Activated B cell treated with CpG ODN at 0.5 μM for 24 hours (primary cell): ENCODE measurements at regions of chr17 and their contacts with region 1.

Region 1: DNA sequence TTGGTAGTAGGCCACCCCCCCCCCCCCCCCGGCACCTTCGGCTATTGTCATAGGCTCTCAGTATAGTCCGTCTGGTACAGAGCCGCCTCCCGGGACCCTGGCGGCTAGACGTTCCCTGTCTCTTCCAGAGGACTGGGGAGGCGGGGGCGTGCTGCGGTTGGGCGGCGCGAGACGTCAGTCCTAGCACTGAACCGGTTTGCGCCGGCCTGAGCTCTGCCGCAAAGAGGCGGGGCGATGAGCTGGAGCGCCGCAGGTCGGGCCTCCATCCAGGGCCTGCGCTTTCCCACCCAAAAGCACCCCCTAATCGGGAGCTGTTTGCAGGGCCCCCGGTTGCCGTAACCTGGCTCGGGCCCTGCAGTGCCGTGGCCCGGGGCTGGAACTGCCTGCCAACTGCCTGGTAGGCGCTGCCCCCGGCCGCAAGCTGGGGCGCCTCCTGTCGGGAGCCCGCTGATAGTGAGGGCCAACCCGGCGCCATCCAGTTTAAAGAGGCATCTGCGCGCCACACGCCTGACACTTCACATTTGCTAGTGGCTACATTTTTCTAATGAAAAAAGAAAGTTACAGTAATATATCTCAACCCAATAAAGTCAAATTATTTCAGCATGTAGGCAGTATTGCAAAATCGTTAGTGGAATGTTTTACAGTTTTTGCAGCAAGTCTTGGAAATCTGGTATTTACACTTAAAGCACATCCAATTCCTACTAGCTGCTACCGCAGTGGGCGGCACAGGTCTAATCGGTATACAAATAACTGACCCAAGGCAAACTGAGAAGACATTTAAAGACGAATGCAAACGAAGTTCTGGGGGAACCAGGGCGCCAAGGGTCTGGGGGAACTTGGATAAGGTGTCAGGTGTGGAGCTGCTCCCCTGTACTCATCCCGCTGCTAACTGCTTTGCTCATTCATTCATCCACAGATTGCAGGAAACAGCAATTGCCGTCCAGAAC is 748 bp upstream of the USP22 start:
- DNase-seq: peak; percentile 92
- ATAC-seq: peak; percentile 78
- H3K4me3 Mint-ChIP-seq: peak overlapping the region; percentile 74
- H3K27ac Mint-ChIP-seq: peak overlapping the region; percentile 89
- H3K4me1 Mint-ChIP-seq: peaks cover 37% of the 10 kb centered on the region
- H3K27me3 Mint-ChIP-seq: no peaks in the 10 kb centered on the region
- CTCF ChIP-seq: peak; percentile 21

Region 2: GRCh38 chr17:19977311-19978208 is 1066.0 kb before region 1 on chr17 and contains the start of gene AKAP10:
- CTCF ChIA-PET with region 1: no interaction called
- POLR2A ChIA-PET with region 1: interaction called, 5 read pairs
- intact Hi-C with region 1: loop called (anchors 2 kb)
- DNase-seq: peak; percentile 96
- ATAC-seq: peak; percentile 87
- H3K4me3 Mint-ChIP-seq: peak within 1 kb of the TSS; percentile 99
- H3K27ac Mint-ChIP-seq: peak within 1 kb of the TSS; percentile 99
- H3K4me1 Mint-ChIP-seq: peaks cover 44% of the 10 kb centered on the region
- H3K27me3 Mint-ChIP-seq: no peaks in the 10 kb centered on the region
- CTCF ChIP-seq: no peak
- total RNA-seq, gene AKAP10: 38.7 and 51.5 TPM in 2 replicates

Region 3: DNA sequence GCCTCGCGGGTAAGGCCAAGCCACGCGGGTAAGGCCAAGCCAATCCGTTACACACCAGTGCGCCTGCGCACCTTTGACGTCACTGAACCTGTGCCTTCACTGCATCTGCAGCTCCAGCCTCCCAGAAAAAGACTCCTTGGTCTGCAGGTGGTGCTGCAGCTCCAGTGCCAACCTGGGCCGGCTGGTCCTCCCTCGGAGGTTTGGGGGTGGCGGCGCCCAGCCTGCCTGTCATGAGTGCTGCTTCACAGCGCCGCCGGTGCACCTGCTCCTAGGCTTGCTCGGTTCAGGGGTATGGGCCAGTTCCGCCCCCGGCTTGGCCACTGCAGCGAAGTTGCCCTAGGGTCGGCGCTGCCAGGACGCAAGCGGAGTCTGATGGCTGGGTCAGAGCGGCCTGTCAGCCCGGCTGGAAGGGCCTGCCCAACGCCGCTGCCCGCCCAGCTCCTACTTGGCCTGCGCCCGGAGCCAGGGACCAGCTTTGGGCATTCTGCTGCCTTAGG is 147.4 kb before region 1 on chr17:
- CTCF ChIA-PET with region 1: no interaction called
- POLR2A ChIA-PET with region 1: no interaction called
- intact Hi-C with region 1: no loop called
- DNase-seq: peak; percentile 17
- ATAC-seq: peak; percentile 58
- H3K4me3 Mint-ChIP-seq: no peak overlapping the region
- H3K27ac Mint-ChIP-seq: no peak overlapping the region
- H3K4me1 Mint-ChIP-seq: no peaks in the 10 kb centered on the region
- H3K27me3 Mint-ChIP-seq: peaks cover 13% of the 10 kb centered on the region
- CTCF ChIP-seq: no peak

Region 4: DNA sequence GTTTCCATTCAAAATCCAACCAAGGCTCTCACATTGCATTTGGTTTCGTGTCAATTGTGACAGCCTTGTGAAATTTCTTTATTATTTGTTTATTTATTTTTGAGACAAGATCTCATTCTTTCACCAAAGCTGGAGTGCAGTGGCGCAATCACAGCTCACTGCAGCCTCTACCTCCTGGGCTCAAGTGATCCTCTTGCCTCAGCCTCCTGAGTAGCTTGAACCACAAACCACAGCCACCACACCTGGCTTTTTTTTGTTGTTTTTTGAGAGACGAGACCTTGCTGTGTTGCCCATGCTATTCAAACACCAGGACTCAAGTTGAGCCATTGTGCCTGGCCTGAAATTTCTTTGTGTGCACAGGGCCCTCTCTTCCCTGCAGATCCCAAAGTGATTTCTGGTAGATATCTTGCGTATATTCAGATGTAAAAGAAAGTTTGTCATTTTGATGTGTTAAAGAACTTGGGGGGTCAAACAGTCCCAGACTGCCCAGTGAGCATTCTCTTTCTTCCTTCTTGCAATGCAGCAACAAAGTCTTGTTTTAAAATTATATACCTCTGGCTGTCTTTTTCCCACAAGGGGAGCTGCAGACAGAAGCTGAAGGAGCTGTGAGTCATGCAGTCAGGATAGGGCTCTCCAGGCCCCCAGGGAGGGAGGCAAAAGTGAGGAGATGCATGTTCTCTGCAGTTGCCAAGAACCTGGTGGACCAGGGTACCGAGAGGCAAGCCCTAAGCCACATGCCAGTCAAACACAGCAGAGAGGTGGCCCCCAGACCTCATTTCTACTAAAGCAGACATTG is 14.7 kb after region 1 on chr17:
- CTCF ChIA-PET with region 1: interaction called, 13 read pairs
- POLR2A ChIA-PET with region 1: interaction called, 68 read pairs
- intact Hi-C with region 1: loop called (anchors 1 kb)
- DNase-seq: no peak
- ATAC-seq: no peak
- H3K4me3 Mint-ChIP-seq: no peak overlapping the region
- H3K27ac Mint-ChIP-seq: no peak overlapping the region
- H3K4me1 Mint-ChIP-seq: peaks cover 19% of the 10 kb centered on the region
- H3K27me3 Mint-ChIP-seq: no peaks in the 10 kb centered on the region
- CTCF ChIP-seq: no peak

Region 5: GRCh38 chr17:21126645-21127510 is 83.3 kb after region 1 on chr17 and contains the start of gene DHRS7B:
- CTCF ChIA-PET with region 1: interaction called, 3 read pairs
- POLR2A ChIA-PET with region 1: interaction called, 13 read pairs
- intact Hi-C with region 1: loop called (anchors 1 kb)
- DNase-seq: peak; percentile 95
- ATAC-seq: peak; percentile 90
- H3K4me3 Mint-ChIP-seq: peak within 1 kb of the TSS; percentile 94
- H3K27ac Mint-ChIP-seq: peak within 1 kb of the TSS; percentile 91
- H3K4me1 Mint-ChIP-seq: peaks cover 35% of the 10 kb centered on the region
- H3K27me3 Mint-ChIP-seq: peaks cover 3% of the 10 kb centered on the region
- CTCF ChIP-seq: no peak
- total RNA-seq, gene DHRS7B: 11.8 and 12.1 TPM in 2 replicates

Region 6: DNA sequence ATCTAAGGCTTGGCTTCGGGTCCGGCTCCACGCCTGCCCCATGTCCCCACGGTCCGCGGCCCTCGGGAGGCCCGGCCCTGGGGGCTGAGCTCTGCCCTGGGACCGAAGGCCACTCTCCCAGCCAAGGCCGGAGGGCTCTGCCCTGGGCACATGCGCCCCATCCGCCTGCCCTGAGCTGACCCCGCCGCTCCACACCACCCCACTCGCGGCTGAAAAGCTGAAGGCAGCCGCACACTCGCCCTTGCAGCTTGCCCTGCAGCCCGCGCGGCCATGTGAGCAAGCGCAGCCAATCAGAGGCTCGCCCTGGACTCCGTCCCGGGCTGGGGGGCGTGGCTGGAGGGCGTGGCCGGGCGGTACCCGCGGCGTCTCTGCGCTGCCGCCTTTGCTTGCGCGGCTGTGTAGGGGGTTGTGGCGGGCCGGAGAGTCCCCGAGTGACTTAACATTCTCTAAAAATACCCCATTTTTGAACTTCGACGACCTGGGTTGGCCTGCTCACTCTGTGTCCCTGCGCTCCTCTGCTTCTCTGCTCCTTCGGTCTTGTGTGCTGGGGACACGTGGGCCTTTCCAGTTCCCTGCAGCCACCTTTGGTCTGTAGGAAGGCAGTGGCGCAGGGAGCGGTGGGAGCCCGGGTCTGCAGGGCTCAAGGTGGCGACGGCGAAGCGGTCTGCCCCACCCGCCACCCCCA is 232.2 kb after region 1 on chr17:
- CTCF ChIA-PET with region 1: interaction called, 3 read pairs
- POLR2A ChIA-PET with region 1: interaction called, 11 read pairs
- intact Hi-C with region 1: no loop called
- DNase-seq: peak; percentile 99
- ATAC-seq: peak; percentile 92
- H3K4me3 Mint-ChIP-seq: peak overlapping the region; percentile 88
- H3K27ac Mint-ChIP-seq: peak overlapping the region; percentile 88
- H3K4me1 Mint-ChIP-seq: peaks cover 34% of the 10 kb centered on the region
- H3K27me3 Mint-ChIP-seq: no peaks in the 10 kb centered on the region
- CTCF ChIP-seq: no peak

Region 7: DNA sequence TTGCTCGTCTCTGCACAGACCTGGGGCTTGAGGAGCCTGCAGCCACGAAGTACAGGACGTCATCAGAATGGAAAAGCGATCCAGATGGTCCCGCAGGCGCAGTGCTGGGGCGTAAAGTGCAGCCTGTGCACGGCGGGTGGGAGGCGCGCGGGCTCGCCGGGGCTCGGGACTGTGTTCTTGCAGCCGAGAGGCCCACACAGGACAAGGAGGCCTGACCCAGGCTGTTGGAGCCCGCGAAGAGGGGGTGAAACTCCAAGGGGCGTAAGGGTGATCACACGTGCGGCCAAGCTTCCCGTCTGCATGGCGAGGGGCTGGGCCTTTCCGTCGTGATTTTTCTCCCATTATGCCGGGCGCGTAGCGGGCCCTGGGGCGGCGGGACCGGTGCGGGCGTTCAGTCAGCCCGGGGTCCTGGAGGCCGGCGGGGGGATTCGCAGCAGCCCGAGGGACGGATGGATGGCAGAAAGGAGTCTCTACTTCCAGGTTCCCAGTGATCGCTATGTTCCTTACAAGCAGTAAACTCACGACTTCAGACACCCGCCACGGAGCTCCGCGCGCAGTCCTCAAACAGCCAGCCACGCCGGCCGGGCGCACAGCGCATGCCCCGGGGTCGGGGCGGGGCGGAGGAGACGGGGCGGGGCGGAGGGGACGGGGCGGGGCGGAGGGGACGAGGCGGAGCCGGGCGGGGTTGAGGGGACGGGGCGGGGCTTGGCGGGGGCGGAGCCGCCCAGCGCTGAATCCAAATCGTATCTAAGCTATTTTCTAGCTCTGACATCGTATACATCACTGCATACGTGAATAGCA is 507.7 kb after region 1 on chr17:
- CTCF ChIA-PET with region 1: no interaction called
- POLR2A ChIA-PET with region 1: interaction called, 3 read pairs
- intact Hi-C with region 1: loop called (anchors 2 kb)
- DNase-seq: peak; percentile 75
- ATAC-seq: peak; percentile 97
- H3K4me3 Mint-ChIP-seq: peak overlapping the region; percentile 84
- H3K27ac Mint-ChIP-seq: no peak overlapping the region
- H3K4me1 Mint-ChIP-seq: peaks cover 11% of the 10 kb centered on the region
- H3K27me3 Mint-ChIP-seq: peaks cover 33% of the 10 kb centered on the region
- CTCF ChIP-seq: no peak